ENCODE measurements at regions of chr5 and their contacts with region 1.

Region 1: GRCh38 chr5:61301341-61302199 is 30.5 kb upstream of the ZSWIM6 start:
- DNase-seq: peak; percentile 96
- ATAC-seq: peak; percentile 92
- H3K4me3 ChIP-seq: peak overlapping the region; percentile 15 to 55; a peak in 3 of 4 replicates
- H3K27ac ChIP-seq: peak overlapping the region; percentile 76
- H3K4me1 ChIP-seq: peaks cover 47% of the 10 kb centered on the region
- H3K27me3 ChIP-seq: no peaks in the 10 kb centered on the region
- CTCF ChIP-seq: no peak

Region 2: GRCh38 chr5:61177716-61178115 is 123.9 kb before region 1 on chr5:
- CTCF ChIA-PET with region 1: no interaction called
- POLR2A ChIA-PET with region 1: no interaction called
- in situ Hi-C with region 1: no loop called
- intact Hi-C with region 1: loop called (anchors 10 kb)
- DNase-seq: no peak
- ATAC-seq: no peak
- H3K4me3 ChIP-seq: no peak overlapping the region
- H3K27ac ChIP-seq: no peak overlapping the region
- H3K4me1 ChIP-seq: no peaks in the 10 kb centered on the region
- H3K27me3 ChIP-seq: no peaks in the 10 kb centered on the region
- CTCF ChIP-seq: no peak

Region 3: GRCh38 chr5:61228691-61229280 is 72.8 kb before region 1 on chr5:
- CTCF ChIA-PET with region 1: no interaction called
- POLR2A ChIA-PET with region 1: no interaction called
- in situ Hi-C with region 1: no loop called
- intact Hi-C with region 1: no loop called
- DNase-seq: no peak
- ATAC-seq: peak; percentile 15; the same call in 1 of the 2 replicates
- H3K4me3 ChIP-seq: peak overlapping the region in 1 of 2 experiments; percentile 1; a peak in 1 of 4 replicates
- H3K27ac ChIP-seq: no peak overlapping the region
- H3K4me1 ChIP-seq: 0 out of 2 replicates have a peak, but pooled peaks cover 4% of the 10 kb centered on the region
- H3K27me3 ChIP-seq: no peaks in the 10 kb centered on the region
- CTCF ChIP-seq: no peak

Region 4: DNA sequence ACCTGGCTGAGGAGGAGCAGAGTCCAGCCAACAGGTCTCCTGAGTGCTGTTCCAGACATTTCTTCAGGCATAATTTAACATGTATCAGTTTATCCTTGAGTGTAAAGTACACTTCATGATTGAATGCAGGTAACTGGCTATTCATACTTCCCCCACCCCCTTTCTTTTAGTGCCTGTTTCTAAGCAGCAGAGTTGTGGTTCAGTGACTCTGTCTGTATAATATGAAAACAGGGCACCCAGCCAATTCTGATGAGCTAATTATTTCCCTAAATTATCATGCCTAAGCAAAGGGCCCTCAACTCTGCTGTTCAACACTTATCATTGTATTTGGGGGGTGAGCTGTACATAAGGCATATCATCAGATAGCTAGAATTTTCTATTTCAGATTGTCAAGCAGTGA is 21.4 kb before region 1 on chr5:
- CTCF ChIA-PET with region 1: no interaction called
- POLR2A ChIA-PET with region 1: interaction called, 13 read pairs
- in situ Hi-C with region 1: no loop called
- intact Hi-C with region 1: no loop called
- DNase-seq: no peak
- ATAC-seq: peak; percentile 34; the same call in 1 of the 2 replicates
- H3K4me3 ChIP-seq: no peak overlapping the region
- H3K27ac ChIP-seq: no peak overlapping the region
- H3K4me1 ChIP-seq: no peaks in the 10 kb centered on the region
- H3K27me3 ChIP-seq: no peaks in the 10 kb centered on the region
- CTCF ChIP-seq: no peak

Region 5: GRCh38 chr5:61366497-61367240 is 65.1 kb after region 1 on chr5:
- CTCF ChIA-PET with region 1: no interaction called
- POLR2A ChIA-PET with region 1: no interaction called
- in situ Hi-C with region 1: no loop called
- intact Hi-C with region 1: no loop called
- DNase-seq: no peak
- ATAC-seq: no peak
- H3K4me3 ChIP-seq: no peak overlapping the region
- H3K27ac ChIP-seq: no peak overlapping the region
- H3K4me1 ChIP-seq: peaks cover 3% of the 10 kb centered on the region; the same call in 1 of the 2 replicates
- H3K27me3 ChIP-seq: no peaks in the 10 kb centered on the region
- CTCF ChIP-seq: no peak

Measured in Panc1 (cell line).